ENCODE measurements at regions of chr18 and their contacts with region 1.

Region 1: GRCh38 chr18:50356036-50356945 is 18.6 kb upstream of the SKA1 start:
- DNase-seq: no peak
- H3K4me3 Mint-ChIP-seq: no peak overlapping the region
- H3K27ac Mint-ChIP-seq: peak overlapping the region; percentile 45
- H3K4me1 Mint-ChIP-seq: peaks cover 12% of the 10 kb centered on the region
- H3K27me3 Mint-ChIP-seq: peaks cover 32% of the 10 kb centered on the region

Region 2: DNA sequence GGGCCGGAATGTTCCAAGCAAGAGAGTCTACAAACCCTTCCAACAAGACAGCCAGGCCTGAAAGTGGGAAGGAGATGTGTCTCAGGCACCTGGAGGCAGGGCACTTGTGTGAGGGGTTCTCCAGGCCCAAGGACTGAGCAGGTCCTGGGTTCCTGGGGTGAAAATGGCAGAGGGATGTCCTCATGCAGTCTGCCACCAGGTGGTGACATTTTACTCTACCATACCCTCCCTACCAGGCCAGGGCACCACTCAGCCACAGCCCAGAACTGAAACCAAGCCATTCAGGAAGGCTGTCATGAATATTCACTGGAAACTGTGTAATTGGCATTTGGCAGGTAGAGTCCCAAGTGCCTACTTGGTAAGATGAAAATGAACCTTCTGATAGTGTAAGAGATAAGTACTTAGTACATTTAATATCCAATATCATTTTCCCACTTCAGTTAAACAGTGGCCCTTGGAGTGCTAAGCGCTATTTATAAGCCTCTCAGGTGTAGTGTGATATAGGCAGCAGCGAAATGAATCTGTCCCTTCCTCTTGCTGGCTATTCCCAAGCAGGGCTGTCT is 346.4 kb before region 1 on chr18:
- intact Hi-C with region 1: loop called (anchors 1 kb)
- DNase-seq: peak; percentile 24
- H3K4me3 Mint-ChIP-seq: no peak overlapping the region
- H3K27ac Mint-ChIP-seq: no peak overlapping the region
- H3K4me1 Mint-ChIP-seq: no peaks in the 10 kb centered on the region
- H3K27me3 Mint-ChIP-seq: peaks cover 7% of the 10 kb centered on the region

Region 3: DNA sequence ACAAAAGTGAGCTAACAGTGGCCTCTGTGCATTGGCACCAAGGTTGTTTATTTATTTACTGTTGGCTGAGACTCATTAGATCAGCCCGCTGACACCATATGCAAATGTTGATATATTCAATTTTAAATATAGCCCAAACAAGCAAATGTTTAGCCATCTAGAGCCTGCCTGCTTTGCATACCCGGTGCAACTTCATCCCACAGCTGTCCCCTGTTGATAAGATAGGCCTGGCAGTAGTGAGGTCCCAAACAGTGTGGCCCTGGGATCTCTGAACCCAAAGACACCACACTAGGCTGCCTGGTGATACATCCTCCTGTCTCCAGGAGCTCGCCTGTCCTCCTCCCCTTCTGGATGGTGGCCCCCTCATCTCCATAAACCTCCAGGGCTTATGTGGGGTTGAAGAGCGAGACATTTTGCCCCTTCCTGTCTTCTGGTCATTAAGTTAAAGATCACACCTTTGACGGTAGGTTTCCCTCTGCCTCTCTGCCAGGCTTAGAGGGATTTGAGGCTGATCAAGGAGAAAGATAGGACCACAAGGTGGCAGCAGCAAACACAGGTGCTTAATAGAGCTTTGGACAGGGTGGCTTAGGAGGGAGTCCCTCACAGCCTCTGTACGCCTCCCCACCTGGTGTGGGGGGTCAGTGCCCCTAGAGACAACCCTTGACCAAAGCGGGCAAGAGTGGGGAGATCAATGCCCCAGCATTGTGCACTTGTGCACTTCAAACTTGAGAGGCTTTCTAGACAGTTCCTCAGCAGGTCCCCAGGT is 137.7 kb before region 1 on chr18:
- intact Hi-C with region 1: loop called (anchors 1 kb)
- DNase-seq: peak; percentile 10
- H3K4me3 Mint-ChIP-seq: no peak overlapping the region
- H3K27ac Mint-ChIP-seq: no peak overlapping the region
- H3K4me1 Mint-ChIP-seq: no peaks in the 10 kb centered on the region
- H3K27me3 Mint-ChIP-seq: peaks cover 13% of the 10 kb centered on the region

Region 4: DNA sequence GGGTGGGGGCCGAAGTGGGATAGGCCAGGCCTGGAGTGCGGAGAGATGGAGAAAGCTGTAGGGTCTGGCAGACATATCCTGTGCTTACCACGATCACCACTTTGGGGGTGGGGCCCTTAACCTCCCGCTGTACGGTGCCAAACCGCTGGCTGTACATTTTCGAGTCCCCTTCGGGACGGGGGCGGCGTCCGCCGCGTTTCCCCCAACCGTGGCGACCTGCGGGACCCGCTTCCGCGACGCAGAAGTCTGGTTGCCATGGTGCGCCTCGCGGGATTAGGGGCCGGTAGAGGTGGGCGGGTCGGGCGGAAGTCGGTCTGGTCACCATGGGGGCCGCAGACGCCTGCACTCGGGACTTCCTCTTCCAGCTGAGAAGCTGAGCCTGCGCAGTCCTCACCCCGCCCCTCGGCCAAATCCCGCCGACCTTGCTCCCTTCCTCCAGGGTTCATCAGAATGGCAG is 90.0 kb before region 1 on chr18 and contains the start of gene CFAP53:
- intact Hi-C with region 1: loop called (anchors 1 kb)
- DNase-seq: peak; percentile 79
- H3K4me3 Mint-ChIP-seq: peak within 1 kb of the TSS; percentile 80
- H3K27ac Mint-ChIP-seq: peak within 1 kb of the TSS; percentile 62
- H3K4me1 Mint-ChIP-seq: peaks cover 11% of the 10 kb centered on the region
- H3K27me3 Mint-ChIP-seq: peaks cover 7% of the 10 kb centered on the region
- total RNA-seq, gene CFAP53: 0.25 and 0.51 TPM in 2 replicates

Region 5: DNA sequence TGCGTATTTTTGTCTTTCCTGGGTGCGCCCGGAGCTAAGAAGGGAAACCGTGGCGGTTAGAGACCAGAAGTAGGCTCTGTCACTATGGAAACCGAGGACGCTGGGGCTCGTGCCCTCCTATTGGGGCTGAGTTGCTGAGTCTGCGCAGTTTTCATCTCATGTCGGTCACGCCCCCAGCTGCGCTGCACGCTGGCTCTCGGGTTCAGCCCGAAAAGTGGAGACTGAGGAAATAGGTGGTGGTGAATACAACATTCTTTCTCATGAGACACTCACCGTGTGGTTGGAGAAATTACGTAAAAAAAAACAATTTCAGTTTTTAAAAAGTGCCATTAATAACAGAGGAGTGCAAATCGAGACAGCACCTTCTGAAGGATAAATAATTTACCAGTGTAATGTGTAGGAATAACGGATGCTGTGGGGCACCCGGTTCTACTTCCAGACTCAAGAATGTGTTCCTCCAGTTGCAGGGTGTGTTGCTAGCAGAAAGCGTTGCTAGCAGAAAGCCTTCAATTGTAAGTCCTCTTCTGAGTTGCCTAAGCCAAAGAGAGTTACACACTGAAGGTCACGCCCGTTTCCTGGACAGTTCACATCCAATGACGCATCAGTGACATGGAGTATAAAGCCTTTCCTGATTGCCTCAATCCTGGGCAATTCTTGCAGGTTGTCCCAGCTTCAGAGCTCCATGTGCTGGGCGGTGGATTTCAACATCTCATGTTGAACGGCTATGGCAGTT is 48.4 kb before region 1 on chr18:
- intact Hi-C with region 1: loop called (anchors 5 kb)
- DNase-seq: peak; percentile 87
- H3K4me3 Mint-ChIP-seq: peak overlapping the region; percentile 89
- H3K27ac Mint-ChIP-seq: peak overlapping the region; percentile 57
- H3K4me1 Mint-ChIP-seq: peaks cover 21% of the 10 kb centered on the region
- H3K27me3 Mint-ChIP-seq: peaks cover 17% of the 10 kb centered on the region

Measured in activated T-helper 2 cell treated with anti-CD3 and anti-CD28 coated beads, Interferon-gamma antibody, Interleukin-2, Interleukin-4, amounts not matched to agents 10 μg/mL and 5 μg/mL and 100 μg/mL, durations not matched to agents 14 hours and 24 hours and 36 hours (primary cell).